ENCODE measurements at regions of chr2 and their contacts with region 1.

Region 1: GRCh38 chr2:196263181-196263747 is 91.9 kb upstream of the STK17B start:
- DNase-seq: peak; percentile 62
- H3K4me3 Mint-ChIP-seq: peak overlapping the region; percentile 75
- H3K27ac Mint-ChIP-seq: peak overlapping the region; percentile 99
- H3K4me1 Mint-ChIP-seq: peaks cover 77% of the 10 kb centered on the region
- H3K27me3 Mint-ChIP-seq: no peaks in the 10 kb centered on the region

Region 2: GRCh38 chr2:195468771-195469170 is 794.5 kb before region 1 on chr2:
- CTCF ChIA-PET with region 1: no interaction called
- POLR2A ChIA-PET with region 1: no interaction called
- intact Hi-C with region 1: no loop called
- DNase-seq: no peak
- H3K4me3 Mint-ChIP-seq: no peak overlapping the region
- H3K27ac Mint-ChIP-seq: no peak overlapping the region
- H3K4me1 Mint-ChIP-seq: peaks cover 5% of the 10 kb centered on the region
- H3K27me3 Mint-ChIP-seq: no peaks in the 10 kb centered on the region

Region 3: DNA sequence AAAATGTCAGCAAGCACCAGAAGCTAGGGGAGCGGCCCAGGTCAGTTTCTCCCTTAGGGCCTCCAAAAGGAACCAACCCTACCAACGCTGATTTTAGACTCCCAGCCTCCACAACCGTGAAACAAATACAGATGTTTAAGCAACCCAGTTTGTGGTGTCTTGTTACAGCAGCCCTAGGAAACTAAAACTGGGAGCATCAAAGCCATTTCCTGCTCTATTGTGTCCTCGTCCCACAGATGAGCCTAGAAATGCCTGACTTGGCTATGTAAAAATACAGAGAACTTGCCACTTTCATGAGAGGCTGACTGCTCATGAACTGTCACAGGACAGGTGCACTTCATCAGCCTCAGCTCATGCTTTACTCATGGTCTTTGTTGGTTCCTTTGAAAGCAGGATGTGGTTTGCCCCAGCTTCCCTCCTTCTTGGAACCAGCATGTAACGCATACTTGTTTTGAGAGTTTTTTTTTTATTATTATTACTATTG is 703.8 kb before region 1 on chr2:
- CTCF ChIA-PET with region 1: no interaction called
- POLR2A ChIA-PET with region 1: no interaction called
- intact Hi-C with region 1: loop called (anchors 1 kb)
- DNase-seq: peak; percentile 91
- H3K4me3 Mint-ChIP-seq: peak overlapping the region; percentile 63
- H3K27ac Mint-ChIP-seq: peak overlapping the region; percentile 92
- H3K4me1 Mint-ChIP-seq: peaks cover 61% of the 10 kb centered on the region
- H3K27me3 Mint-ChIP-seq: no peaks in the 10 kb centered on the region

Region 4: DNA sequence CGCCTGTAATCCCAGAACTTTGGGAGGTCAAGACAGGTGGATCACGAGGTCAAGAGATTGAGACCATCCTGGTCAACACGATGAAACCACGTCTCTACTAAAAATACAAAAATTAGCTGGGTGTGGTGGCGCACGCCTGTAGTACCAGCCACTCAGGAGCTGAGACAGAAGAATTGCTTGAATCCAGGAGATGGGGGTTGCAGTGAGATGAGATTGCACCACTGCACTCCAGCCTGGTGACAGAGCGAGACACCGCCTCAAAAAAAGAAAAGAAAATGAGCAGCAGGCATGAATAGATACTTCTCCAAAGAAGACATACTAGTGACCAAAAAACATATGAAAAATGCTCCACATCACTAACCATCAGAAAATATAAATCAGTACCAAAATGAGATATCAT is 333.2 kb before region 1 on chr2:
- CTCF ChIA-PET with region 1: no interaction called
- POLR2A ChIA-PET with region 1: no interaction called
- intact Hi-C with region 1: no loop called
- DNase-seq: no peak
- H3K4me3 Mint-ChIP-seq: no peak overlapping the region
- H3K27ac Mint-ChIP-seq: no peak overlapping the region
- H3K4me1 Mint-ChIP-seq: no peaks in the 10 kb centered on the region
- H3K27me3 Mint-ChIP-seq: no peaks in the 10 kb centered on the region

Region 5: GRCh38 chr2:196200557-196200956 is 62.7 kb before region 1 on chr2:
- CTCF ChIA-PET with region 1: interaction called, 3 read pairs
- POLR2A ChIA-PET with region 1: no interaction called
- intact Hi-C with region 1: loop called (anchors 1 kb)
- DNase-seq: peak; percentile 61
- H3K4me3 Mint-ChIP-seq: peak overlapping the region; percentile 64
- H3K27ac Mint-ChIP-seq: peak overlapping the region; percentile 82
- H3K4me1 Mint-ChIP-seq: peaks cover 52% of the 10 kb centered on the region
- H3K27me3 Mint-ChIP-seq: no peaks in the 10 kb centered on the region

Region 6: DNA sequence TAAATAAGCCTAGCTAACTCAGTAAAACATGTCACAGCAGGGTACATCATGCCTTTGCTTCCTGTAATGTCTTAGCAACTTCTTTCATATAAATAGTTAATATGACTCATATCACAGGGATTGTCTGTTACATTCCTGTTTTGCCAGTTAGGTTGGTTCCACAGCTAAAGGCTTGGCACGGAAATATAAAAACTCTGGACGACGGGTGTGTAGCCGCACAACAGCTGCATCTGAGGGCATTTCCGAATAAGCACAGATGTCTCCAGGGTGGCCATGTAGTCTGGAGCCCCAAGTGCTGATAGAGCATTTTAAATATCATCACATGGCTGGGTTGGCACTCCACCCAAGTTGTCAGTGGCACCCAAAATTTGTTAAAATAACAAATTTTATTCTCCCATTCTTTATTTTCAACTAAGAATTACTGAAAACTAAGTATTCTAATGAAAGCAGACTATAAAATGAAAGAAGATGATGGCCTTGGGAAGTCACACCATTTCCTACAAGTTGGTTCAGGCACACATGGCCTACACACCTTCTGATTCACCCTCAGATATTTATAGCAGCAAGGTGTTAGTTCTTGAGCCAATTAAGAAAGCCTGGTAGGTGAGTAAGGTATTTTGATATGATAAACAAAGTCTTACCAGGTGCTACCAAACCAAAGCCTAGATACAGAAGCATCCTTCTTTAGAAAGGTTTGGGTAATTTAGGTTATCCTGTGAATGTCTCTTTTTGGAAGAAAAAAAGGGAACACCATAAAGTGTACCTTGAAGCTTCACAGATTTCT is 30.1 kb before region 1 on chr2:
- CTCF ChIA-PET with region 1: interaction called, 22 read pairs
- POLR2A ChIA-PET with region 1: interaction called, 28 read pairs
- intact Hi-C with region 1: no loop called
- DNase-seq: no peak
- H3K4me3 Mint-ChIP-seq: peak overlapping the region; percentile 7
- H3K27ac Mint-ChIP-seq: peak overlapping the region; percentile 93
- H3K4me1 Mint-ChIP-seq: peaks cover 89% of the 10 kb centered on the region
- H3K27me3 Mint-ChIP-seq: no peaks in the 10 kb centered on the region

Region 7: DNA sequence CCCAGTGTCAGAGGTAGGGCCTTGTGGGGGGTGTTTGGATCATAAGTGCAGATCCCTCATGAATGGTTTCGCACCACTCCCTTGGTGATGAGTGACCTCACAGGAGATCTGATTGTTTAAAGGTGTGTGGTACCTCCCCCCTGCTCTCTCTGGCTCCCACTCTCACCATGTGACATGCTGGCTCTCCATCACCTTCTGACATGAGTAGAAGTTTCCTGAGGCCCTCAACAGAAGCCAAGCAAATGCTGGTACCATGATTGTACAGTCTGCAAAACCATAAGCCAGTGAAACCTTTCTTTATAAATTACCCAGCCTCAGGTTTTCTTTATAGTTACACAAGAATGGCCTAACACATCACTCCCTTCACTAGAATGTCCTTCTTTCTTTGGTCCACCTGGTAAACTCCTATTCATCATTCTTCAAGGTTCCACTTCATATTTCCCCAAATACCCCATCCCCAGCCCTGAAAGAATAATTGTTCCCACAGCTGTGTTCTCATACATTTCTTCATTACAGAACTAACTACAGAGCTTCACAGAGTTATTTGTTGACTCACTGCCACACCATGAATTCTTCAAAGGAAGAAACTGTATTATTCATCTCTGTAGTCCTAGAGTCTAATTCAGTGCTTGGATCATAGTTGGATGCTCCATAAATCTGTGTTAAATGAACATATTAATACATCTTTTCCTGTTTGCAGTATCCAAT is 10.7 kb before region 1 on chr2:
- CTCF ChIA-PET with region 1: interaction called, 6 read pairs
- POLR2A ChIA-PET with region 1: interaction called, 16 read pairs
- intact Hi-C with region 1: loop called (anchors 1 kb)
- DNase-seq: peak; percentile 44
- H3K4me3 Mint-ChIP-seq: no peak overlapping the region
- H3K27ac Mint-ChIP-seq: peak overlapping the region; percentile 87
- H3K4me1 Mint-ChIP-seq: peaks cover 79% of the 10 kb centered on the region
- H3K27me3 Mint-ChIP-seq: no peaks in the 10 kb centered on the region

Region 8: GRCh38 chr2:196291873-196292800 is 28.9 kb after region 1 on chr2:
- CTCF ChIA-PET with region 1: interaction called, 3 read pairs
- POLR2A ChIA-PET with region 1: interaction called, 4 read pairs
- intact Hi-C with region 1: loop called (anchors 2 kb)
- DNase-seq: no peak
- H3K4me3 Mint-ChIP-seq: peak overlapping the region; percentile 10
- H3K27ac Mint-ChIP-seq: no peak overlapping the region
- H3K4me1 Mint-ChIP-seq: peaks cover 49% of the 10 kb centered on the region
- H3K27me3 Mint-ChIP-seq: no peaks in the 10 kb centered on the region

Region 9: GRCh38 chr2:196468394-196468793 is 205.1 kb after region 1 on chr2:
- CTCF ChIA-PET with region 1: no interaction called
- POLR2A ChIA-PET with region 1: no interaction called
- intact Hi-C with region 1: no loop called
- DNase-seq: no peak
- H3K4me3 Mint-ChIP-seq: no peak overlapping the region
- H3K27ac Mint-ChIP-seq: no peak overlapping the region
- H3K4me1 Mint-ChIP-seq: no peaks in the 10 kb centered on the region
- H3K27me3 Mint-ChIP-seq: peaks cover 3% of the 10 kb centered on the region

Region 10: GRCh38 chr2:196670342-196670741 is 407.1 kb after region 1 on chr2:
- CTCF ChIA-PET with region 1: no interaction called
- POLR2A ChIA-PET with region 1: no interaction called
- intact Hi-C with region 1: no loop called
- DNase-seq: no peak
- H3K4me3 Mint-ChIP-seq: no peak overlapping the region
- H3K27ac Mint-ChIP-seq: no peak overlapping the region
- H3K4me1 Mint-ChIP-seq: no peaks in the 10 kb centered on the region
- H3K27me3 Mint-ChIP-seq: no peaks in the 10 kb centered on the region